ENCODE measurements at regions of chr16 and their contacts with region 1.

Region 1: DNA sequence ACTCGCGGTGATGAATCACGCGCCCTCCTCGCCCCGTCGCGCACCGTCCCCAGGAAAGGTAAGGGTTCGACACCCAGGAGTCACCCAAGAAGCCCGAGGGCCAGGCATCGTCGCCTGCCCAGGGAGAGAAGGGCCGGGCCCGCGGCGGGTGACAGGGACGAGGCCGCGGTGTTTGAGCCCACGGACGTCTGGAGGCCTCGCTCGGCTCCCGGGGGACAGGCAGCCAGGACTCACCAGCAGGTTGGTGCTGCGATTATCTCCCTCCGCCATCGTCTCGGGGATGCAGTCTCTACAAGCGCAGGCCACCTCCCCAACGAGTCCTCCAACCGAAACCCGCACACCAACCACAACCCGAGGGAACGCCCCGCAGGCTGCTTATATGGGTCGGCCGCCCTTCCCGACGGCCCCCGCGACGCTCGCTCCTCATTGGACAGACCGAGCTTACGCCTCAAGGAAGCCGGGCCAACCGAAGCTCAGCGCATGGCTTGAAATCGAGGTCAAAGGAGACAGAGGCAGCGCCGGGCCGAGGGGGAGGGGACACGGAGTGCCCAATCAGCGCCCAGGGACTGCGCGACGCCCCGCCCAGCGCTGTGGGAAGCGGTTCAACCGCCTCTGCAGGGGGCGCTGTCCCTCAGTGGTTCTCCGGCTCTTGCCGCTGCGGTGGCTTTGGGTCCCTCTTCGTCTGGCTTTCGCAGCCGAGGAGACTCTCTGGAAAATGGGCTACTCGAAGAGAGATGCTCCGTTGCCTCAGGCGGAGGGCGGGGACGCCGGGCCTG is at the start of gene ARL6IP1:
- DNase-seq: peak; percentile 100
- H3K4me3 ChIP-seq: peak within 1 kb of the TSS; percentile 99
- H3K27ac ChIP-seq: peak within 1 kb of the TSS; percentile 89
- H3K4me1 ChIP-seq: peaks cover 66% of the 10 kb centered on the region
- CTCF ChIP-seq: peak; percentile 85
- total RNA-seq, gene ARL6IP1: 322 and 349 TPM in 2 replicates

Region 2: GRCh38 chr16:18789850-18790724 is 11.3 kb before region 1 on chr16 and contains the start of gene RPS15A:
- CTCF ChIA-PET with region 1: interaction called, 4 read pairs
- POLR2A ChIA-PET with region 1: interaction called, 64 read pairs
- intact Hi-C with region 1: loop called (anchors 1 kb)
- DNase-seq: peak; percentile 98
- H3K4me3 ChIP-seq: peak within 1 kb of the TSS; percentile 85
- H3K27ac ChIP-seq: peak within 1 kb of the TSS; percentile 64
- H3K4me1 ChIP-seq: peaks cover 42% of the 10 kb centered on the region
- CTCF ChIP-seq: no peak
- total RNA-seq, gene RPS15A: 2,355 and 2,645 TPM in 2 replicates

Region 3: DNA sequence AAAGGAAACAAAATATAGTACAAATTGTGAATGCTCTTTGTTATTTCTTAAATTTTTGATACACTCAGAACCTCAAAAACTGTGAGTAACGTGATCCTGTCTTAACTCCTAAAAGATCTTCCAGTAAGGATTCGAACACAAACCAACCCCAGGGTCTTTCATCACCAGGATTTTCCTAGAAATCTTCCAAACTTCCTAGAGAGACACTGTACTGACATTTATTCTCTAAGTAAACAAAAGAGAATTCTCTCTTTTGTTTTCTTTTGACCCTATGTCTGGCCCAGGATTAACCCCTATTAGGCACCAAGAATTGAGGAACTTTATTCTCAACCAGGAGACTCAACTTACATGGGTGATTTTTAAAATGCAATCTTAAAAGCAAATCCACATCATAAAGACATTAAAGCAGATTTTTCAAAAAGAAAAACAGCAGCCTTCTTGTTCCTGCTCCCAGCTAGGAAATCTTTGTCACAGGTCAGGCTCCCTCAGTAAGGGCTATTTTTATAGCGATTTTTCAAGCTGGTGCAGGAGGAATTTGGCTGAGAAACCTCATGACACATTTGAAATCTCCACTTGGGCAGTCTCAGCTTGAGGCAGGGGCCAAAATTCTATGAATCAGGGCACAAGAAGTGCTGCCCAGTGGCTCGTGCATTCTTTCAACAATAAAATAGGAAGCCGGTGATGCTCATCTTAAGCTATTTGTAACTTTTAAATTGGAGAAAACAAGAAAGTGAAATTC is 131.0 kb after region 1 on chr16:
- CTCF ChIA-PET with region 1: no interaction called
- POLR2A ChIA-PET with region 1: interaction called, 4 read pairs
- intact Hi-C with region 1: loop called (anchors 2 kb)
- DNase-seq: no peak
- H3K4me3 ChIP-seq: no peak overlapping the region
- H3K27ac ChIP-seq: no peak overlapping the region
- H3K4me1 ChIP-seq: peaks cover 24% of the 10 kb centered on the region
- CTCF ChIP-seq: no peak

Region 4: GRCh38 chr16:18969855-18970240 is 168.5 kb after region 1 on chr16:
- CTCF ChIA-PET with region 1: no interaction called
- POLR2A ChIA-PET with region 1: interaction called, 3 read pairs
- intact Hi-C with region 1: loop called (anchors 2 kb)
- DNase-seq: no peak
- H3K4me3 ChIP-seq: no peak overlapping the region
- H3K27ac ChIP-seq: no peak overlapping the region
- H3K4me1 ChIP-seq: peaks cover 5% of the 10 kb centered on the region
- CTCF ChIP-seq: no peak

Region 5: DNA sequence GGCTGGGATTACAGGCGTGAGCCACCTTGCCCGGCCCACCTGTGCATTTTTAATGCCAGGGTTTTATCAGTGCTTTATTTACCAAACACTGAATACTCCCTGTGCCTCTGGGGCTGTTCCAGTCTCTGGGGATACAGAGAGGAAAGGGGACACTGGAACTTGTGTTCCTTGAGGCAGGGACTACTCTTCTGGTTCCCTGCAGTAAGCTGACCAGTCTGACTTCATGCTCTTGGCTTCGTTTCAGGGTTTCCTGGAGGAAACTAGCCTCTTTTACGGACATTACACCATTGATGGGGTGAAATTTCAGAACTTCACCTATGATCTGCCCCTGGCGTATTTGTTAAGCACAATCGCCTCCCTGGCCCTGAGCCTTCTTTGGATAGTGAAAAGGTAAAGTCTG is 228.6 kb after region 1 on chr16:
- CTCF ChIA-PET with region 1: no interaction called
- POLR2A ChIA-PET with region 1: no interaction called
- intact Hi-C with region 1: no loop called
- DNase-seq: no peak
- H3K4me3 ChIP-seq: no peak overlapping the region
- H3K27ac ChIP-seq: no peak overlapping the region
- H3K4me1 ChIP-seq: no peaks in the 10 kb centered on the region
- CTCF ChIP-seq: no peak

Region 6: DNA sequence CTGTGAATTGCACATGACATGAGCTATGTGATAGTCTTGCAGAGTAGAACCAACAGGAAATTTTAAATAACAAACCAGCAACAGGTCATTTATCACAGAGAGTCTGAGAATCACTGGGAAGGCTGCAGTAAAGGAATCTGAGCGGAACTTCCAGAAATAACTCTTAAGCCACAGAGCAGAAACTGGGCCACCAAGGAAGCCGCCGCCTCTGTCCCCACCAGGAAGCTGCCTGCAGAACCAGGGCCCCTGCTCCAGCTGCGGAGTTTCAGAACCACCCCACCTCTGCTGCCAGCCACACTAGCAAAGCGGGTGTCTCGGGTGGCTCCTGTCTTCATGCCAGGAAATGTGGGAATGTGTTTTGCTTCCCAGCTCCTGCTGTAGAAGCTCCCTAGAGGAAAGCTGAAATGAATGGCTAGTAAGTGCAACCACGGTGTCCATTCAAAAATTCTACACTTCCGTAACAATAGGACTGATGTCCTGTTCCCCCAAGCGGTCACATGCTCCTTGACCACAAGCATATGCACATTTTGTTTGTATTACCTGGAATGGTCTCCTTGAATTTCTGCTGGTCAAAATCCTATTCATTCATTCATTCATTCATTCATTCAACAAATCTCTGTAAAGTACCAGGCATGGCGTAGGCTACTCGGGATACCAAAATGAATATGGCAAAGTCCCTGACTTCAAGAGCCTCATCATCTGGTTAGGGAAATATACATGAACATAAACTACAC is 304.7 kb after region 1 on chr16:
- CTCF ChIA-PET with region 1: no interaction called
- POLR2A ChIA-PET with region 1: no interaction called
- intact Hi-C with region 1: no loop called
- DNase-seq: no peak
- H3K4me3 ChIP-seq: no peak overlapping the region
- H3K27ac ChIP-seq: no peak overlapping the region
- H3K4me1 ChIP-seq: peaks cover 5% of the 10 kb centered on the region
- CTCF ChIP-seq: no peak

Measured in OCI-LY7 (cell line).